CD8-positive, alpha-beta T cell (primary cell): ENCODE measurements at regions of chr12 and their contacts with region 1.

Region 1: GRCh38 chr12:22334410-22335290 is at the start of gene ST8SIA1:
- DNase-seq: peak; percentile 25 to 82 (median 64)
- ATAC-seq: peak; percentile 51
- H3K4me3 ChIP-seq: peak within 1 kb of the TSS; percentile 52 to 82
- H3K4me3 Mint-ChIP-seq: peak within 1 kb of the TSS; percentile 91
- H3K27ac ChIP-seq: peak within 1 kb of the TSS; percentile 14 to 63
- H3K27ac Mint-ChIP-seq: peak within 1 kb of the TSS; percentile 86
- H3K4me1 ChIP-seq: no peaks in the 10 kb centered on the region
- H3K4me1 Mint-ChIP-seq: peaks cover 30% of the 10 kb centered on the region
- H3K27me3 ChIP-seq: no peaks in the 10 kb centered on the region
- H3K27me3 Mint-ChIP-seq: peaks cover 31% of the 10 kb centered on the region
- CTCF ChIP-seq: no peak
- total RNA-seq, gene ST8SIA1: 12.2 to 12.6 TPM

Region 2: DNA sequence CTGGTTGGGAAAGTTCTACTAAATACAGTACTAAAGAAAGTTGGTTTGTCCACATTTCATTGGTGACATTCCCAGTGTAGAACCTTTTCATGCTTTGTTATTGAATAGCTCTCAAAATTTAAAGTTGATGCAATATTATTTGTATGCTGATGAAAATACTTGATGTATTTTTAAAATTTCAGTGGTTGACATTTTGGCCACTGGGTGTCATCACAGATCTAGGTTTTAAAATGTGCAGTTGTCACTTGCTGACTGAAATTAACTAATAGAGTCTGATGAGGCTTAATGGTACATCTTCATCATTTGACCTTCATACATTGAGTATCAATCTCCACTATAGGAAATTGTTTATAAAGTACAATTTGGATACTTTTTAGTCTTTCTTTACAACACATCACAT is 251.5 kb before region 1 on chr12:
- CTCF ChIA-PET with region 1: interaction called, 10 read pairs
- POLR2A ChIA-PET with region 1: no interaction called
- intact Hi-C with region 1: loop called (anchors 2 kb)
- DNase-seq: peak in 4 of 9 experiments; percentile 13 to 63 (median 44)
- ATAC-seq: peak; percentile 49
- H3K4me3 ChIP-seq: no peak overlapping the region
- H3K4me3 Mint-ChIP-seq: no peak overlapping the region
- H3K27ac ChIP-seq: no peak overlapping the region
- H3K27ac Mint-ChIP-seq: no peak overlapping the region
- H3K4me1 ChIP-seq: no peaks in the 10 kb centered on the region
- H3K4me1 Mint-ChIP-seq: no peaks in the 10 kb centered on the region
- H3K27me3 ChIP-seq: no peaks in the 10 kb centered on the region
- H3K27me3 Mint-ChIP-seq: no peaks in the 10 kb centered on the region
- CTCF ChIP-seq: peak; percentile 47

Region 3: DNA sequence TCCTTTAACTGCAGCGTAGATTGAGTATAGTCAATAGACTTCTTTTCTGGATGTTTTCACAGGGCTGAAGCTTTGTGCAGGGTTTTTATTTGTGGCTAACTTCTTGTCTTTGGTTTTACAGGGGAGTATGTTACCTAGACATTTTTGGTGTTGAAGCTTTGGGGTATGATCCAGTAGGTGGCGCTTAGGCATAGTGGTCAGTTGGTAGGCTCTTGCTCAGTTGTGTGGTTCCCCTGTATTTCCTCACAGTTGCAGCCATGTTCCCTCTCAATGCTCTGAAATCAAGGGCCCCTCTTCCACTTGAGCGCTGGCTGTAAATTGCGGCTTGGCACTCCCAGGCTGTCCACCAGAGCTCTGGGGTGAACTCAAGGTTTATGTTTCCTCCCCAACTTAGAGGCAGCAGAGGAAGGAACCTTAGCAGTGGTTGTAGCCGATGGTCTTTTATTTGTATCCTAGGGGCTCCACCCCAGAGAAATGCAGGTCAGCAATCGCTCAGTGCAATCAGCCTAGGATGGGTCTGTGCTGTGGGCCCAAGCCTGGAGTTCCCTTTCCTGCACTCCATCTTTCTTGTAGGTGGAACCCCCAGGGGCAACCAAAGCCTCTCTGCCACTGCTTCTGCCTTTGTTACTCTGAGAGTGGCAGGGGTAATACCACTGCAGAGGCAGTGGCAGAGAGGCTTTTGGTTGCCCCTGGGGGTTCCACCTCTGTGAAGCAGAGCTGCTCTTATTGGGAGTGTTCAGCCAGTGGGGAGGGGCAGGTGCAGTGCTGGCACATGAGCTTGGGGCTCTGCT is 233.5 kb before region 1 on chr12:
- CTCF ChIA-PET with region 1: interaction called, 5 read pairs
- POLR2A ChIA-PET with region 1: no interaction called
- intact Hi-C with region 1: loop called (anchors 1 to 5 kb)
- DNase-seq: peak in 7 of 9 experiments; percentile 8 to 75 (median 31)
- ATAC-seq: peak; percentile 51
- H3K4me3 ChIP-seq: no peak overlapping the region
- H3K4me3 Mint-ChIP-seq: no peak overlapping the region
- H3K27ac ChIP-seq: no peak overlapping the region
- H3K27ac Mint-ChIP-seq: no peak overlapping the region
- H3K4me1 ChIP-seq: peaks cover 4% of the 10 kb centered on the region
- H3K4me1 Mint-ChIP-seq: peaks cover 3% of the 10 kb centered on the region
- H3K27me3 ChIP-seq: no peaks in the 10 kb centered on the region
- H3K27me3 Mint-ChIP-seq: no peaks in the 10 kb centered on the region
- CTCF ChIP-seq: no peak

Region 4: DNA sequence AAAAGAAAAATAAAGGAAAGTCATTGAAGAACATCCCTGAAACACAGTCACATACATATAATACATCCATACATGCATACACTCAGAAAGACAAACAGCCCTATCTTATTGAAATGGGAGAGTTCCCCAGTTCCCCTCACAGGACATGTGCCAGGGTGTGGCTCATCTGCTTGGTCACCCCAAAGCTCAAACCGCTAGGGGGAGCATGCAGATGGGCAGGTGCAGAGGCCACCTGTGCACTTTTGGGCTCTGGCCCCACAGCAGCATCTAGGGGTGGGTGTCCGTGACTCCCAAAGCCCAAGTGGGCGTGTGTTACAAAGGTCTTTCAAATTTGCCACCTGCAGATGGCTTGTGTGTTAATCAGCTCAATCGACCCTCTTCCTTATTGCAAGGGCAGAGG is 213.4 kb before region 1 on chr12:
- CTCF ChIA-PET with region 1: interaction called, 6 read pairs
- POLR2A ChIA-PET with region 1: no interaction called
- intact Hi-C with region 1: loop called in 1 of 2 experiments (anchors 1 kb)
- DNase-seq: peak in 6 of 9 experiments; percentile 5 to 59 (median 44)
- ATAC-seq: no peak
- H3K4me3 ChIP-seq: no peak overlapping the region
- H3K4me3 Mint-ChIP-seq: no peak overlapping the region
- H3K27ac ChIP-seq: no peak overlapping the region
- H3K27ac Mint-ChIP-seq: no peak overlapping the region
- H3K4me1 ChIP-seq: no peaks in the 10 kb centered on the region
- H3K4me1 Mint-ChIP-seq: no peaks in the 10 kb centered on the region
- H3K27me3 ChIP-seq: no peaks in the 10 kb centered on the region
- H3K27me3 Mint-ChIP-seq: no peaks in the 10 kb centered on the region
- CTCF ChIP-seq: peak; percentile 19

Region 5: DNA sequence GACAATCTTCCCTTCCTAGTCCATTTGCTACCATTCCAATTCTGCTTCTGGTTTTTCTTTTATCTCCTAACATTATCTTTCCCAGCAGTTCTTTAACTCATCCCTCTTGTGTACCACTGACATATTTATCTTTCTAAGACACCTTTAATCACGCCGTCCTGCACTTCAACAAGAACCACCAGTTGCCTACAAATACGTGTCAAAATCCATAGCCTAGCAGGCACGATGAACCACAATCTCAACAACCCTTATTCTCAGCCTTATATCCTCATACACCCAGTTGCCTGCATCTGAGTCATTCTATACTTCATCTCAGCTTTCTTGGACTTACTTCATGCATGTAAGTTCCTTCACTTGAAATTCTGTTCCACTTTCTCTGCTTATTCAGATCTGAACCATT is 16.2 kb after region 1 on chr12:
- CTCF ChIA-PET with region 1: no interaction called
- POLR2A ChIA-PET with region 1: no interaction called
- intact Hi-C with region 1: no loop called
- DNase-seq: no peak
- ATAC-seq: no peak
- H3K4me3 ChIP-seq: no peak overlapping the region
- H3K4me3 Mint-ChIP-seq: no peak overlapping the region
- H3K27ac ChIP-seq: no peak overlapping the region
- H3K27ac Mint-ChIP-seq: no peak overlapping the region
- H3K4me1 ChIP-seq: no peaks in the 10 kb centered on the region
- H3K4me1 Mint-ChIP-seq: no peaks in the 10 kb centered on the region
- H3K27me3 ChIP-seq: no peaks in the 10 kb centered on the region
- H3K27me3 Mint-ChIP-seq: no peaks in the 10 kb centered on the region
- CTCF ChIP-seq: no peak

Region 6: DNA sequence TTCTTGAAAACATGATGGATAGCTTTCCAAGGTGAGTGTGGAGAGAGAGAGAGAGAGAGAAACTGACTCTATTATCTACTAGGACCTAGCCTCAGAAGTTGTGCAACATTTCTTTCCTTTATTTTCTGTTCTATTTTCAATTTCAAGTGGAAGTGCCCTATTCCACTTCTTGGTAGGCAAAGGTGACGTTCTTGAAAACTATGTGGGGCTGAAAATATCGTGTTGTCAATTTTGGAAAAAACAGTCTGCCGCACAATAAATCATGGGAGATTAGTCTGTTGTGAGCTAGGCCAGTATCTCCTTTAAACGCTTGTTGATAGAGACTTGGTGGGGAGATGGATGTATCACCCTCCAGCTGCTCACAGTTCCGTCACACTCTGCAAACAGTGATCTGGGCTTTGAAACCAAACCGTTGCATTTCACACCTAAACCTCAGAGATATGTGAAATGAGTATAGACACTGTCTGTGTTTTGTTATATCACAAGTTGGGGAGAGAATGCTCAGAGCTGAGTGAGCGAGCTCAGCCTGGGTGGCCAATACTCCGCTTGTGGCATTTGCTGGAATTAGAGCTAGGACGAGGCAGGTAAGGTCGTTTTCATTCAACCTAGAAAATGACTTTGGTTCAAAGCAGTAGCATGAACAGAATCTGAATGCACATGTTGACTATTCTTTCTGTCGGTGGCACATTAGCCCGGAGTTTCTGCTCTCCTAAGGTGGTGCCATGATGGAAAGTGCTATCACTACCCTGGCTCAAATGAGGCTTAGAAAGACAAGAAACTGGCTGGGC is 74.9 kb after region 1 on chr12:
- CTCF ChIA-PET with region 1: interaction called, 12 read pairs
- POLR2A ChIA-PET with region 1: interaction called, 23 read pairs
- intact Hi-C with region 1: loop called (anchors 2 kb)
- DNase-seq: peak in 8 of 9 experiments; percentile 19 to 92 (median 53)
- ATAC-seq: peak; percentile 84
- H3K4me3 ChIP-seq: peak overlapping the region in 1 of 2 experiments; percentile 56
- H3K4me3 Mint-ChIP-seq: peak overlapping the region; percentile 81
- H3K27ac ChIP-seq: peak overlapping the region; percentile 27 to 78
- H3K27ac Mint-ChIP-seq: peak overlapping the region; percentile 95
- H3K4me1 ChIP-seq: peaks cover 7% of the 10 kb centered on the region
- H3K4me1 Mint-ChIP-seq: peaks cover 30% of the 10 kb centered on the region
- H3K27me3 ChIP-seq: no peaks in the 10 kb centered on the region
- H3K27me3 Mint-ChIP-seq: no peaks in the 10 kb centered on the region
- CTCF ChIP-seq: no peak

Region 7: GRCh38 chr12:22443379-22444316 is 109.0 kb after region 1 on chr12:
- CTCF ChIA-PET with region 1: interaction called, 10 read pairs
- POLR2A ChIA-PET with region 1: interaction called, 4 read pairs
- intact Hi-C with region 1: loop called (anchors 5 to 10 kb)
- DNase-seq: peak; percentile 20 to 86 (median 53)
- ATAC-seq: peak; percentile 99
- H3K4me3 ChIP-seq: no peak overlapping the region
- H3K4me3 Mint-ChIP-seq: no peak overlapping the region
- H3K27ac ChIP-seq: no peak overlapping the region
- H3K27ac Mint-ChIP-seq: no peak overlapping the region
- H3K4me1 ChIP-seq: peaks cover 4% of the 10 kb centered on the region
- H3K4me1 Mint-ChIP-seq: peaks cover 4% of the 10 kb centered on the region
- H3K27me3 ChIP-seq: no peaks in the 10 kb centered on the region
- H3K27me3 Mint-ChIP-seq: no peaks in the 10 kb centered on the region
- CTCF ChIP-seq: peak; percentile 77

Region 8: DNA sequence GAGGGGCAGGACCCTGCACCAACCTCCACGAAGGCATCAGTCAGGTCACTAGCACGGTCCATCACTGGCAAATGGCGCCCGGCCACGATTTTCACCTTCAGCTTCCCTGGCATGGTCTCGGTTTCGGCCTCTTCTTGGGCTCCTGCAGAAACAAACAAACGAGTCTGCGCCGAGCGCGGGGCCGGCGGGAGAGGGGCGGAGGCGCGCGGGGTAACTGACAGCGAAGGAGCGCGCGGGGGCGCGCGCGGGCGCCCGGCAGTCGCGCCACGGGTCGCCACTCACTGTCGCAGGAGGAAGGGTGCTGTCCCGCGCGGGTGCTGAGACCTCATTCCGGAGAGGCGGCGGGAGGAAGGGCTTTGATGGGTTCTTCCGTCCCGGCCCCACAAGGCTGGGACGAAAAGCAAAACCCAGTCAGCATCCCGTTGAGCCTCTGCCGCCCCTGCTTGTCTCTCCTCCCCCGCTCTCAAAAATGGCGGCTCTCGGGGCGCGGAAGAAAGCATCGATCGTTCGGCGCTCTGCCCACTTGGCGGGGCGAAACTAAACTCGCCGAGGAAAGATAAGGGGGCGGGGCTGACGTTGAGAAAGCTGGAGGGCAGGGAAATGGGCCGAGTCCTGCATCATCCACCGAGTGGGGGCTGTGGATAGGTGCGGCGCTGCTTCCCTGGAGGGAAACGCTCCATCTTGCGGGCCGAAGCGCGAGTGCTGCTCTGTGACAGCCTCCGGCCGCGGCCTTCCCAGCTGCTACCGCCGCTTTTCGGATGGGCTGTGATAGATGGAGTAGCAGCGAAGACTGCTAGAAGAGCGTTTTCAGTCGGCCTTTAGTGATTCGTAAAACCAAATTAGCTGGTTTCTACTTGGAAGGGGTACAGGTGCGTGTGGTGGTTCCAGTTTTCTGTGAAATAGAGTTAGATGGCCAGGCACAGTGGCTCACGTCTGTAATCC is 209.7 kb after region 1 on chr12 and contains the start of gene C2CD5:
- CTCF ChIA-PET with region 1: no interaction called
- POLR2A ChIA-PET with region 1: no interaction called
- intact Hi-C with region 1: loop called in 1 of 2 experiments (anchors 5 kb)
- DNase-seq: peak; percentile 92 to 99 (median 95)
- ATAC-seq: peak; percentile 91
- H3K4me3 ChIP-seq: peak within 1 kb of the TSS; percentile 79 to 99
- H3K4me3 Mint-ChIP-seq: peak within 1 kb of the TSS; percentile 94
- H3K27ac ChIP-seq: peak within 1 kb of the TSS; percentile 92
- H3K27ac Mint-ChIP-seq: peak within 1 kb of the TSS; percentile 94
- H3K4me1 ChIP-seq: peaks cover 25% of the 10 kb centered on the region
- H3K4me1 Mint-ChIP-seq: peaks cover 38% of the 10 kb centered on the region
- H3K27me3 ChIP-seq: no peaks in the 10 kb centered on the region
- H3K27me3 Mint-ChIP-seq: no peaks in the 10 kb centered on the region
- CTCF ChIP-seq: peak; percentile 16
- total RNA-seq, gene C2CD5: 19.5 to 24.4 TPM